ENCODE measurements at regions of chr4 and their contacts with region 1.

Region 1: DNA sequence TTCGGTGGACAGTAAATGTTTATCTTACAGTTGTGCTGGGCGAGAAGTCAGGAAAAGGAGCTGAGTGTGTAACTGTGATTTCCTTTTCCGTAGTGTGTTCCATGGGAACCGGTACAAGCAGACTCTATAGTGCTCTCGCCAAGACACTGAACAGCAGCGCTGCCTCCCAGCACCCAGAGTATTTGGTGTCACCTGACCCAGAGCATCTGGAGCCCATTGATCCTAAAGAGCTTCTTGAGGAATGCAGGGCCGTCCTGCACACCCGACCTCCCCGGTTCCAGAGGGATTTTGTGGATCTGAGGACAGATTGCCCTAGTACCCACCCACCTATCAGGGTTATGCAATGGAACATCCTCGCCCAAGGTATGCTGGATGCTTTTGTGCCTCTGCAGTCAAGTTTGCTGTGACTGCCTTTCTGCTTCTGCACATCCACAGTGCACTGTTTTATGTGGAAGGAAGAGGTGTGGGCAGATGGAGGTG is 27.4 kb downstream of the NOCT start:
- H3K4me3 Mint-ChIP-seq: no peak overlapping the region
- H3K27ac Mint-ChIP-seq: no peak overlapping the region
- H3K4me1 Mint-ChIP-seq: no peaks in the 10 kb centered on the region
- H3K27me3 Mint-ChIP-seq: no peaks in the 10 kb centered on the region

Region 2: GRCh38 chr4:139030614-139031235 is 12.3 kb before region 1 on chr4:
- intact Hi-C with region 1: no loop called
- H3K4me3 Mint-ChIP-seq: no peak overlapping the region
- H3K27ac Mint-ChIP-seq: no peak overlapping the region
- H3K4me1 Mint-ChIP-seq: peaks cover 52% of the 10 kb centered on the region
- H3K27me3 Mint-ChIP-seq: no peaks in the 10 kb centered on the region

Region 3: DNA sequence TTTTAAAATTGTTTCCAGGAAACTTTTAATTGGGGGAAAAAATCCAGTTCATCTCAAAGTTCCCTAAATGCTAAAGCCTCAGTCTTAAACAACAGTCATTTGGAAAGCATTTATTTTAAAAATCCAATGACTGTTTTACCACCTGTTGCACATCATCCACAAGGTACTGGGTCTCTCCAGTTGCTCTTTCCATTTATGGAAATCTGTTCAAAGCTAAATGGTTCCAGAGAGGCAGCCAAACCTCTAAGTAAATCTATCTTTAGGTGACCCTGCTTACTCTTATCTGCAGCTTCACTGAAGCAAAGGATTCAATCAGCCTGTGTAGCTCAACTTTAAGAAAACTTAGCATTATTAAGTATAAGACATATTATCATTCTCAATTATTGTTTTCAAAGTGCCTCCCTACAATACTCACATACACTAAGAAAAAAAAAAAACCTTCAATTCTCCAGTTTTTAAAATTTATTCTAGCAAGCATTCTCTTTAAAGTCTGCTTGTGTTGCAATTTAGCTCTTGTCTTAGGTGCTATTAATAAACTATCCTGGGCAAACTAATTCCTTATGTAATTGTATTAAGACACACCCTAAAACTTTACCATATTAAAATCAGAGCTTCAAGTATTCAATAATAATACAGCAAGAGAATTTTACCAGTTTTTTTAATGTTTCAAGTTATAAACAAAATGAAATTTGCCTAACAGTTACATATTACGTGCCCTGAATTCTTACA is 33.2 kb after region 1 on chr4:
- intact Hi-C with region 1: loop called (anchors 5 kb)
- H3K4me3 Mint-ChIP-seq: no peak overlapping the region
- H3K27ac Mint-ChIP-seq: no peak overlapping the region
- H3K4me1 Mint-ChIP-seq: peaks cover 8% of the 10 kb centered on the region
- H3K27me3 Mint-ChIP-seq: no peaks in the 10 kb centered on the region

Region 4: DNA sequence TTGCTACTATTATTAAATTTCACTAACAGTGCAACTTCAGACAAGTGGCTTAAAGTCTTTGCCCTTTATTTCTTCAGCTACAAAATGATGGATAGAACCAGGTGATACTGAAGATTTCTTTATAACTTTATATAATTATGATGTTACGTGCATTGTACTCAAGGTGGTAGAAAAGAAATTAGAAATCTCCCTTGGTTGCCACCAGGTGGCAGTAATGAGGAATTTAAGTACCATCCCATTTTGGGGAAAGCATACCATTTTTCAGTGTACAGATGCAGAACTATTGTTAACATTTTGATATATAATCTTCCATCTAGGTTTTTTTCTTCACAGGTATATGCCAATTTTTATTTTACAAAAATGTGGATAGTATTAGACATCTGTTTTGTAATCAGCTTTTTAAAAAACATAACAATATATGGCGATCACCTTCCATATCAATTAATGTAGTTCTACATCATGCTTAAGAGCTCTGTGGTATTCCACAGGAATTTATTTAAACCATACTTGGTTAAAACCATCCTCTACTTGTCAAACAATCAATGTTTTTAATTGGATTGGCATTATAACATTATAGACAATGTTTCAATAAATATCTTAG is 373.2 kb after region 1 on chr4:
- intact Hi-C with region 1: no loop called
- H3K4me3 Mint-ChIP-seq: no peak overlapping the region
- H3K27ac Mint-ChIP-seq: no peak overlapping the region
- H3K4me1 Mint-ChIP-seq: peaks cover 28% of the 10 kb centered on the region
- H3K27me3 Mint-ChIP-seq: no peaks in the 10 kb centered on the region

Measured in dendritic cell treated with granulocyte-macrophage colony-stimulating factor and Interleukin-4, amounts not matched to agents 40 ng/mL and 50 ng/mL, for 4 days (primary cell).